ENCODE measurements at regions of chr5 and their contacts with region 1.

Region 1: DNA sequence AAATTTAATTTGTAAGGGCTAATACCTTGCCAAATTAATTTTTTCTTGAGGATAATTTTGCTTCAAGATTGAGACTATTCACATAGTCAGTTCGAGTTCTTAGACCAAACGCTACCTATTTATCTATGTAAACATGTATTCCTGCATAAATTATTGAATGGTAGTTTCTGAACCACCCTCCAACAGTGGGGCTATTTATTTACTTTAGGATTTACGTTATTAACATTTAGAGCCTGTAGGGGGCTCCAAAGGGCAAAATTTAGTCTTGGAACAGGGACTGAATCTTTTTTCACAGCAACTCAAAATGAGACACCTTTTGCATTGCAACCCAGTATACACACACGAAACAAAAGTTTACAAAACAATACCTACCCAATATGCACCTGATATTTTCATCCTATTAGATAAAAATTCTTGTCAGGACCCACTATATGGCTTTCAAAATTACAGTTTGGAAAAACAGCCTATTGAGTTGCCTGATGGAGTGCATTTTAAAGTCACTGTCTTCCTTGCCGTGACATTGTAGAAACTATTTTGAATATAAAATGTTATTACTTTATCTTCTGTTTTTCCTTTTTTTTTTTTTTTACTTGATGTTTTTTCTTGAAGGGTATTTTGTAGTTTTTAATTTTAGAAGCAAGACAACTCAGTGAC is 47.1 kb upstream of the POU4F3 start:
- DNase-seq: no peak
- ATAC-seq: peak; percentile 75

Region 2: GRCh38 chr5:146378986-146379385 is 87.4 kb after region 1 on chr5:
- intact Hi-C with region 1: no loop called
- DNase-seq: no peak
- ATAC-seq: no peak

Region 3: DNA sequence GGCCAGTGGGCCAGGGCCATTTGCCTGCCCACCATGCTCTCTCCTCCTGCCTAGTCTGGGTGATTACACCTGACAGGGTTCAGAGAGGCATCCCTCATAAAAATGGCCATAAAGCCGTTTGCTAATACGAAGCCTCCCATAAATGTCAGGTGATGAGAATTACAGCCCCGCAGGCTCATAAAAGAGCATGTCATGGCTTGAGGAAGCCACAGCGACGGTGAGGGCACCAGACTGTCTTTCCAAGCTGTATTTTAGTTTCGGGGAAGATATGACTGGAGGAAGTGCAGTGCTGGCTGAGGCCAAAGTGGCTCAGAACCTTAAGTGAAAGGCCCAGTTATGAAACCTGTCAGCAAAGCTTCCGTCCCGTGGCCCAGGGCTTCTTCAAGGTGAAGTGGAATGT is 137.1 kb after region 1 on chr5:
- intact Hi-C with region 1: loop called (anchors 2 kb)
- DNase-seq: no peak
- ATAC-seq: no peak

Measured in Right ventricle myocardium superior (tissue), 1 donor.